H1 (cell line): ENCODE measurements at regions of chr19 and their contacts with region 1.

Region 1: GRCh38 chr19:14674764-14675163 is at the start of gene ADGRE3:
- DNase-seq: no peak
- H3K4me3 ChIP-seq: no peak within 1 kb of the TSS
- H3K27ac ChIP-seq: no peak within 1 kb of the TSS
- H3K4me1 ChIP-seq: no peaks in the 10 kb centered on the region
- H3K27me3 ChIP-seq: no peaks in the 10 kb centered on the region
- CTCF ChIP-seq: no peak
- EP300 ChIP-seq: no peak
- POLR2A ChIP-seq: no peak
- RAD21 ChIP-seq: no peak
- total RNA-seq, gene ADGRE3: not detected in 2 replicates

Region 2: DNA sequence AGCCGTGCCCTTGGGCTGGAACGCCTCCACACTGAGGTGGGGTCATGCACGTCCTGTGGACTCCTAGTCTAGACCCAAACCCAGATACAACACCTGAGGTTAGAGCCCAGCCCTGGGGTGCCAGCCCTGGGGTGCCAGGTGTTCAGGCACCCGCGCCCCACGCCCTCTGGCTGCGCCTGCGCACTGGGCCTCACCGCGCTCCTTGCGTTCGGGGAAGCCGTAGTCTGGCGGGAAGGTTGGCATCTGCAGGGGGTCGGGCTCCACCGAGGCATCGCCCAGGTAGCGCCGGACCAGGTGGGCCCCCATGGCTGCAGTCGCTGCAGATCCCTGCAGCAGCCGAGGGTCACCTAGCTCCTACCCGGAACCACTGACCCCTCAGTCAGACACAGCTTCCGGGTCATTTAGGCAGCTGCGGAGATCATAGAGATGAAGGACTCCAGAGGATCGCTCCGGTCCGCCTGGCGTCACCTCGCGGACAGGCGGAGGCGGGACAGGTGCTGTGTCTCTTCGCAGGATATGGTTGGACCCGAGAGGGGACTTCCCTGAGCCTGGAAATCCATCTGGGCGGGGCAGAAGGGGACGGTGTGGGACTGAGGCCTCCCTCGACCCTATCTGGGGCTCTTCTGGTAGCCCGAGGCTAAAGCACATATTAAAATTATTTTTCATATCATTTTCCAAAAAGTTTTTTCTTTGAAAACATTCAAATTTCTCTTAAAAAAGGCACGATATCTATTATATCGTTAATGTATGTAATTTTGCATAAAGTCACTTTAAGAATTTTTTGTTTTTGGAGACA is 102.9 kb before region 1 on chr19 and contains the start of gene NDUFB7:
- CTCF ChIA-PET with region 1: interaction called, 11 read pairs
- POLR2A ChIA-PET with region 1: no interaction called
- DNase-seq: peak; percentile 85 to 87
- H3K4me3 ChIP-seq: peak within 1 kb of the TSS; percentile 50 to 98 (median 89)
- H3K27ac ChIP-seq: peak within 1 kb of the TSS; percentile 63
- H3K4me1 ChIP-seq: peaks cover 0 to 4% (median 2%) of the 10 kb centered on the region in 4 experiments; a peak in 3 of 7 replicates
- H3K27me3 ChIP-seq: no peaks in the 10 kb centered on the region
- CTCF ChIP-seq: peak; percentile 87 to 95 (median 90)
- EP300 ChIP-seq: no peak
- POLR2A ChIP-seq: peak in 1 of 2 experiments; percentile 88; a peak in 2 of 3 replicates
- RAD21 ChIP-seq: peak; percentile 32 to 38; a peak in 3 of 4 replicates
- total RNA-seq, gene NDUFB7: 151 and 161 TPM in 2 replicates

Region 3: DNA sequence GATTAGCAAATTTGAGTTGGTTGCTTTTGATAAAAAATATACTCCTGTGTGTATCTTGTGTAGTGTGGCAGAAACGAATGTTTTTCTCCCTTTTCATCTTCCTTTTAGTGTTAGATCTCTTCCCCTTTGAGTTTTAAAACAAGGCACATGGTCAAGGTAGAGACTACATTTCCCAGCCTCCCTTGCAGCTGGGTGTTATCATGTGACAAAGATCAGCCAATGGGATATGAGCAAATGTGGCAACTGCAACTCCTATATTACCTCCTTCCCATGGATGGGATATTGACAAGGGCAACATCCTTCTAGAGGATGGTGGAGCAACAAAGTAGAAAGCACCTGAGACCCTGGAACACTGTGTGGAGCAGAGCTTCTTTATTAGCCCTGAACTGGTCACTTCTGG is 42.5 kb before region 1 on chr19:
- CTCF ChIA-PET with region 1: no interaction called
- POLR2A ChIA-PET with region 1: no interaction called
- DNase-seq: no peak
- H3K4me3 ChIP-seq: no peak overlapping the region
- H3K27ac ChIP-seq: no peak overlapping the region
- H3K4me1 ChIP-seq: no peaks in the 10 kb centered on the region
- H3K27me3 ChIP-seq: no peaks in the 10 kb centered on the region
- CTCF ChIP-seq: no peak
- EP300 ChIP-seq: no peak
- POLR2A ChIP-seq: no peak
- RAD21 ChIP-seq: no peak

Region 4: DNA sequence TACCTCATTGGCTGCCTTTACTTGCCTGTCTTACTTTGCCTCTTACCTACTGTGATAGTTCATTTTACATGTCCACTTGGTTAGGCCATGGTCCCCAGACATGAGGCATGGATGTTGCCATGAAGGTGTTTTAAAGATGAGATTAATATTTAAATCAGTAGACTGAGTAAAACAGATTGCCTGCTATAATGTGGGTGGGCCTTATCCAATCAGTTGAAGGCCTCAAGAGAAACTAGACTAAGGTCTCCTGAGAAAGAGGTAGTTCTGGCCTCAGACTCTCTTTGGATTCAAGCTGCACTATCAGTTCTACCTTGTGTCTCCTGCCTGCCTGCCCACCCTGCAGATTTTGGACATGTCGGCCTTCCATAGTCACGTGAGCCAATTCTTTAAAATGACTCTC is 26.3 kb before region 1 on chr19:
- CTCF ChIA-PET with region 1: no interaction called
- POLR2A ChIA-PET with region 1: no interaction called
- DNase-seq: no peak
- H3K4me3 ChIP-seq: no peak overlapping the region
- H3K27ac ChIP-seq: no peak overlapping the region
- H3K4me1 ChIP-seq: no peaks in the 10 kb centered on the region
- H3K27me3 ChIP-seq: no peaks in the 10 kb centered on the region
- CTCF ChIP-seq: no peak
- EP300 ChIP-seq: no peak
- POLR2A ChIP-seq: no peak
- RAD21 ChIP-seq: no peak

Region 5: GRCh38 chr19:14689598-14690503 is 15.1 kb after region 1 on chr19 and contains the start of gene ZNF333:
- CTCF ChIA-PET with region 1: interaction called, 27 read pairs
- POLR2A ChIA-PET with region 1: no interaction called
- DNase-seq: peak; percentile 85 to 100
- H3K4me3 ChIP-seq: peak within 1 kb of the TSS; percentile 72 to 83 (median 78)
- H3K27ac ChIP-seq: peak within 1 kb of the TSS; percentile 90
- H3K4me1 ChIP-seq: no peaks in the 10 kb centered on the region
- H3K27me3 ChIP-seq: no peaks in the 10 kb centered on the region
- CTCF ChIP-seq: no peak
- EP300 ChIP-seq: no peak
- POLR2A ChIP-seq: peak; percentile 53 to 86
- RAD21 ChIP-seq: no peak
- total RNA-seq, gene ZNF333: 7.3 and 7.5 TPM in 2 replicates

Region 6: GRCh38 chr19:14731200-14731599 is 56.4 kb after region 1 on chr19:
- CTCF ChIA-PET with region 1: no interaction called
- POLR2A ChIA-PET with region 1: no interaction called
- DNase-seq: no peak
- H3K4me3 ChIP-seq: no peak overlapping the region
- H3K27ac ChIP-seq: no peak overlapping the region
- H3K4me1 ChIP-seq: no peaks in the 10 kb centered on the region; a peak in 2 of 7 replicates
- H3K27me3 ChIP-seq: no peaks in the 10 kb centered on the region
- CTCF ChIP-seq: no peak
- EP300 ChIP-seq: no peak
- POLR2A ChIP-seq: no peak
- RAD21 ChIP-seq: no peak